OCI-LY7 (cell line): ENCODE measurements at regions of chr16 and their contacts with region 1.

Region 1: DNA sequence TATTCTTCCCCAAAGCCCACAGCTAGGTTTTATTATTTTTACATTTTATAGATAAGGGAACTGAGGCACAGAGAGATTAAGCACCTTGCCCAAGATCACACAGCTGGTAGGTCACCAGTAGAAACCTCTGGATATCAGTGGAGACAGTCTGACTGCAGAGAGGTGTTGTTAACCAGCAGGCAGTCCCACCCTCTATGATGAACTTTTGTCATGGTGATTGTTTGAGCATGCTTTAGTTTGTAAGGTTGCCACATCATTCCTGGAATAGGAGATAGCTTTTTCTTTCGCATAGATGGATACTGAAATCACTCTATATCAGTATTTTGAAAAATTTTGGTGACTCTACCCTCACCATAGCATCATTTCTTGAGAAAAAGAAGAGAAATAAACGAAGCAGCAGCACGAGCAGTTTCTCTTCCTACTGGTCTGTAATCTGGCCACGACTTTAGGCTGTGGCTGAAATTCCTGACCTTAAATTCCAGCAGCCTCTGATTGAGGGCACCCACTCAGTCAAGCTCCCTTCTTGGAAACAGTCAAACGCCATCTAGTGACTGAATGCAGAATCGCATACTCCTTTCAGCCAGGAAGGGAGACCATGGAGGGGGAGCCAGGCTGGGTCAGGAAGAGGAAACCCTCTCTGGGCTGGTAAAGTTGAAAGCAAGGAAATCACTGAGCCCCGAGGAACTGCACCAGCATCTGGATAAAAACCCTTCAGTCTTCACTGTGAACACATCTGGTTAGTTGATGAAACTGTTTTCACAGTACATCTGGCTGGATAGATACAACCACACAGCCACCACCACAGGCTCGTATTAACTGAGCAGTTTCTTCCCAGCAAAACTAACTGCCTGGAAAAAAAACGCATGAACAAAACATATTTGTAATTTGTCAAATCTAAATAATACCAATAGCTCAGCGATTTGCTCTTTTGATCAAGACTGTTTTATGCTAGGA is 108.4 kb upstream of the XYLT1 start:
- DNase-seq: peak; percentile 71
- H3K4me3 ChIP-seq: no peak overlapping the region
- H3K27ac ChIP-seq: no peak overlapping the region
- H3K4me1 ChIP-seq: peaks cover 5% of the 10 kb centered on the region
- CTCF ChIP-seq: peak; percentile 95

Region 2: DNA sequence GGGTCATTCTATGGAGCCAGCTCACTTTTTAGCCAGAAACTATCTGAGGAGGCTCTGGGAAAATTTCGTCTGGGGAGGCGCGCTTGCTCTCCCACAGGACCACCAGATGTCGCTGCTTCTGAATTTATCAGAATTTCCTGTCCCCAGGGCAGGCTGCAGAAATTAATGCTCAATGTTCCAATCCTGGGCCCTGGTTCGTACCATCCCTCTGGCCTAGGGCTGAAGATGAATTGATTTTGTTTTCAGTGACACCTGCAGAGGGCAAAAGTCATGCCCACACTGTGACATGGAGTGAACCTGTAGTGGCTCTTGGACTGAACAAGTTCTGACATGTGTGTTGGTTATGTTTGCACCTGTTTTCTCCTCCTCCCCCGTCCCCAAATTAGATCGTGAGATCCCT is 717.7 kb before region 1 on chr16:
- CTCF ChIA-PET with region 1: no interaction called
- POLR2A ChIA-PET with region 1: no interaction called
- intact Hi-C with region 1: loop called (anchors 10 kb)
- DNase-seq: peak; percentile 61
- H3K4me3 ChIP-seq: no peak overlapping the region
- H3K27ac ChIP-seq: no peak overlapping the region
- H3K4me1 ChIP-seq: no peaks in the 10 kb centered on the region
- CTCF ChIP-seq: peak; percentile 94

Region 3: GRCh38 chr16:17211797-17212196 is 367.4 kb before region 1 on chr16:
- CTCF ChIA-PET with region 1: no interaction called
- POLR2A ChIA-PET with region 1: no interaction called
- intact Hi-C with region 1: loop called (anchors 10 kb)
- DNase-seq: peak; percentile 77
- H3K4me3 ChIP-seq: no peak overlapping the region
- H3K27ac ChIP-seq: no peak overlapping the region
- H3K4me1 ChIP-seq: peaks cover 10% of the 10 kb centered on the region
- CTCF ChIP-seq: peak; percentile 89

Region 4: GRCh38 chr16:17277977-17278381 is 301.2 kb before region 1 on chr16:
- CTCF ChIA-PET with region 1: no interaction called
- POLR2A ChIA-PET with region 1: no interaction called
- intact Hi-C with region 1: loop called (anchors 5 kb)
- DNase-seq: peak; percentile 74
- H3K4me3 ChIP-seq: peak overlapping the region; percentile 21
- H3K27ac ChIP-seq: peak overlapping the region; percentile 6
- H3K4me1 ChIP-seq: peaks cover 63% of the 10 kb centered on the region
- CTCF ChIP-seq: peak; percentile 82

Region 5: DNA sequence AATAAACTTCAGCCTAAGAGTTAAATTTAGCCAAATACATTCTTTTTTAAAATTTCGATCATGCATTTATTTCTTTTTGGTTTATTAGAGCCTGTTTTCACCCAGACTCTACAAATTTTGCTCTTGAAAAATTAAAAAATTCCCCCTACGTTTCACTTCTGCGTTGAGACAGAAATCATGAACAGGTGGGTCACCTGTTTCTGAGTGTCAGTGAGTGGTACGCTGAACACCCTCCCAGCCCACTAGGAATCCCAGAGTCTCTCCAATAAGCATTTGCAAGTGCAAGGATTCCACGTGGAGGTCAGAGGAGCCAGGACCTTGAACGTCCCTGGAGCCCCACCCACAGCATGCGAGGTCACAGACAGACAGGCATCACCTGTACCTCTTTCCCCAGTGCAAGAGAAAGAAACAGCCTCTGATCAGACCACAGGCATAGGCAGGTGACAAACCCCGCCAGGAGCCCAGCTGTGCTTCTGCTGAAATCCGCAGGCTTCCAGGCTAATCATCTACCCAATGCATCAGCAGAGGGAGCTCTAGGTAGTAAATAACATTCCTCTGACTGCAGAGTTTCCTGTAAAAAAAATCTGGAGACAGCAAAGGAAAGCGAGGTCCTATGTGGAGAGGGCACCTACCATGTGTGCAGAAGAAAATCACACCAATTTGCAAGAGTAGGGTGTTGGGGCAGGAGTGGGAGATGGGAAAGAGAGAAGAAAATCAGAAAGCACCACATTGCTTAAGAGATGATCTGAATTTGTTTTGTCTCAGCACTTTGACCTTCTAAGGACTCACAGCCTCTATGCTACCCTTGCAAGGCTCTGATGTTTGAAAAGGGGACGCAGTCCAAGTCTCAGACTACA is 102.6 kb before region 1 on chr16:
- CTCF ChIA-PET with region 1: interaction called, 4 read pairs
- POLR2A ChIA-PET with region 1: interaction called, 3 read pairs
- intact Hi-C with region 1: loop called (anchors 2 kb)
- DNase-seq: peak; percentile 77
- H3K4me3 ChIP-seq: no peak overlapping the region
- H3K27ac ChIP-seq: no peak overlapping the region
- H3K4me1 ChIP-seq: peaks cover 29% of the 10 kb centered on the region
- CTCF ChIP-seq: peak; percentile 82